ENCODE measurements at regions of chr10 and their contacts with region 1.

Region 1: GRCh38 chr10:110643653-110644597 is at the start of gene RBM20:
- DNase-seq: no peak
- H3K4me3 ChIP-seq: peak within 1 kb of the TSS; percentile 56
- H3K27ac ChIP-seq: no peak within 1 kb of the TSS
- H3K4me1 ChIP-seq: peaks cover 13% of the 10 kb centered on the region
- H3K27me3 ChIP-seq: no peaks in the 10 kb centered on the region; the same call in 1 of the 2 replicates
- CTCF ChIP-seq: no peak
- total RNA-seq, gene RBM20: 0.11 and 0.23 TPM in 2 replicates

Region 2: GRCh38 chr10:110567201-110568054 is 76.5 kb before region 1 on chr10 and contains the start of gene SMC3:
- CTCF ChIA-PET with region 1: no interaction called
- POLR2A ChIA-PET with region 1: no interaction called
- intact Hi-C with region 1: no loop called
- DNase-seq: peak; percentile 74 to 82
- H3K4me3 ChIP-seq: peak within 1 kb of the TSS; percentile 90
- H3K27ac ChIP-seq: peak within 1 kb of the TSS; percentile 86
- H3K4me1 ChIP-seq: peaks cover 7% of the 10 kb centered on the region
- H3K27me3 ChIP-seq: no peaks in the 10 kb centered on the region
- CTCF ChIP-seq: no peak
- total RNA-seq, gene SMC3: 22.1 and 31.2 TPM in 2 replicates

Region 3: DNA sequence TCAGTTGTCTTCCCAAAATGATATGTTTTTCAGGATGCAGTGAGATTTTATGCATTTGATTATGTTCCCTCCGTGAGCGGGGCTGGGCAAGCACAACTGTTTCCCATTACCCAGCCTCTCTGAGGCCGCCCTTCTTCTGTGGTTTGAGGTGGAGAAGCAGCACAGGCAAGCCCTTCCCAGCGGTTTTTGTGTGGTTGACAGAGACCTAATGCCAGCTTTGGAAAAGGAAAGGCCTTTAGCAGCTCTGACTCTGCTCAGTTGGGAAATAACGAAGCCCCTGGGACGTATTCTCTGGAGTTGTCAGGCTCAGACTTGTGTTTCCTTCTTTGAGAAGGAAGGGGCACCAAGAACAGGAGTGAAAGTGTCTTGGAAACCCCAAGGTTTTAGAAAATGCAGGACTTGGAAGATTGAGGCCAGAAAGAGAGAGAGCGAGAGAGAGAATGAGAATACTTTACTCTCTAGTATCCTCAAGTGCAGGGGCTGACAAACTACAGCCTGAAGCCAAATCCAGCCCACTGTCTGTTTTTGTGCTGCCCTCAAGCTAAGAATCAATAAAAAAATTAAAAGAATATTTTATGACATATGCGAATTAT is 207.2 kb after region 1 on chr10:
- CTCF ChIA-PET with region 1: no interaction called
- POLR2A ChIA-PET with region 1: interaction called, 14 read pairs
- intact Hi-C with region 1: no loop called
- DNase-seq: no peak
- H3K4me3 ChIP-seq: no peak overlapping the region
- H3K27ac ChIP-seq: no peak overlapping the region
- H3K4me1 ChIP-seq: peaks cover 17% of the 10 kb centered on the region
- H3K27me3 ChIP-seq: no peaks in the 10 kb centered on the region
- CTCF ChIP-seq: no peak